HCT116 (cell line): ENCODE measurements at regions of chr9 and their contacts with region 1.

Region 1: DNA sequence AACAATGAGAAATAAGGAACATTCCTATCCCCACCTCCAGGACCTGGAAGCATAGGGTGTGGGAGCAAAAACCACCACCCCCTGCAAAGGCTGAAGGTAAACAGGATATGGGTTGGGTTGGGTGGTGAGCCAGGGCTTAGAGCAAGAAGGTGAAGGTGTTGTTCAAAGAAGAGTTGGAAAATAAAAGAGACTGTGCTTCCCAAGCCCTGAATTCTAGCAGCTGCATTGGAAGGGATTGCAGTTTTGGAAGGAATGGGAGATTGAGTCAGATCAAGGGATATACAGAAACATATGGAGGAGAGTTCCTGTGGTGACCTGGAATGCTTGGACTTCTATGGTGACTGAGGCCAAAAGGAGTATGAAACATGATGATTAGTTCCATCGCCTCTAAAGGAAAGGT is 24.7 kb upstream of the MTAP start:
- DNase-seq: peak; percentile 73
- ATAC-seq: peak; percentile 79
- H3K4me3 ChIP-seq: peak overlapping the region; percentile 19 to 44
- H3K27ac ChIP-seq: peak overlapping the region; percentile 92
- H3K4me1 ChIP-seq: peaks cover 69 to 86% of the 10 kb centered on the region in 2 experiments
- H3K27me3 ChIP-seq: no peaks in the 10 kb centered on the region
- CTCF ChIP-seq: no peak
- POLR2A ChIP-seq: no peak
- RAD21 ChIP-seq: 0 out of 2 replicates have a peak, but pooled peaks have one; percentile 11

Region 2: GRCh38 chr9:21591221-21592062 is 186.3 kb before region 1 on chr9:
- CTCF ChIA-PET with region 1: no interaction called
- POLR2A ChIA-PET with region 1: interaction called, 10 read pairs
- RAD21 ChIA-PET with region 1: no interaction called
- intact Hi-C with region 1: no loop called
- DNase-seq: peak; percentile 94
- ATAC-seq: peak; percentile 82
- H3K4me3 ChIP-seq: peak overlapping the region; percentile 51 to 66
- H3K27ac ChIP-seq: peak overlapping the region; percentile 99
- H3K4me1 ChIP-seq: peaks cover 64 to 98% of the 10 kb centered on the region in 2 experiments
- H3K27me3 ChIP-seq: no peaks in the 10 kb centered on the region
- CTCF ChIP-seq: no peak
- POLR2A ChIP-seq: no peak
- RAD21 ChIP-seq: peak; percentile 43; the same call in 1 of the 2 replicates

Region 3: DNA sequence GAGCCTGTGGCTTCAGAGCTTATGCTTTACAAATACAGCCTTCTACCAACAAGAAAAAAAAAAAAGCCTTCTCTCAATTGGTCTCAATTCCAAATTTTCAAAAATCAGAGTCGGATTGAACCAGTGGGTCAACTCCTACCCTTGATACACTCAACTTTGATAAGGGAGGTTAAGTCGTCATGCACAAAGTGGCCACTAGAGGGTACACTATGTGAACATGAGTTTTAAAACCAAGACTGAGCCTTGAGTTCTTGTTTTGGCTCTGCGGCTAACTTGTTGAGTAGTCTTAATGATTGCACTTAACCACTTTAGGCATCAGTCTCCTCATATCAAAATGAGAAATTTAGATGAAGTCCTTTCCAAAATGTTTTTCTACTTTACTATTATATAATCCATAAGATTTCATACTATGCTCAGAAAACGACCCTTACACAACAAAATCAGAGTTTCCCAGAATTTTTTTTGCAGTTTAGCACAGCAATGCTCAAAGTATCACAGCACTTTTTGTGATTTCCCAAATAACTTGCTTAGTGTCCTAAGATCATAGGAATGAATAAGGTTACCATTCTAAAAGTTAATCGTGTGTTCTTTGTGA is 68.1 kb before region 1 on chr9:
- CTCF ChIA-PET with region 1: interaction called, 3 read pairs
- POLR2A ChIA-PET with region 1: interaction called, 10 read pairs
- RAD21 ChIA-PET with region 1: no interaction called
- intact Hi-C with region 1: no loop called
- DNase-seq: peak; percentile 80
- ATAC-seq: peak; percentile 49
- H3K4me3 ChIP-seq: no peak overlapping the region
- H3K27ac ChIP-seq: peak overlapping the region; percentile 95
- H3K4me1 ChIP-seq: peaks cover 73 to 78% of the 10 kb centered on the region in 2 experiments
- H3K27me3 ChIP-seq: no peaks in the 10 kb centered on the region
- CTCF ChIP-seq: peak; percentile 69 to 92 (median 74)
- POLR2A ChIP-seq: no peak
- RAD21 ChIP-seq: peak; percentile 74

Region 4: GRCh38 chr9:21741151-21741550 is 36.5 kb before region 1 on chr9:
- CTCF ChIA-PET with region 1: no interaction called
- POLR2A ChIA-PET with region 1: no interaction called
- RAD21 ChIA-PET with region 1: no interaction called
- intact Hi-C with region 1: no loop called
- DNase-seq: no peak
- ATAC-seq: no peak
- H3K4me3 ChIP-seq: no peak overlapping the region
- H3K27ac ChIP-seq: no peak overlapping the region
- H3K4me1 ChIP-seq: peaks cover 9 to 16% of the 10 kb centered on the region in 2 experiments; a peak in 2 of 4 replicates
- H3K27me3 ChIP-seq: no peaks in the 10 kb centered on the region
- CTCF ChIP-seq: no peak
- POLR2A ChIP-seq: no peak
- RAD21 ChIP-seq: no peak